GM13977 (cell line): ENCODE measurements at regions of chr6 and their contacts with region 1.

Region 1: DNA sequence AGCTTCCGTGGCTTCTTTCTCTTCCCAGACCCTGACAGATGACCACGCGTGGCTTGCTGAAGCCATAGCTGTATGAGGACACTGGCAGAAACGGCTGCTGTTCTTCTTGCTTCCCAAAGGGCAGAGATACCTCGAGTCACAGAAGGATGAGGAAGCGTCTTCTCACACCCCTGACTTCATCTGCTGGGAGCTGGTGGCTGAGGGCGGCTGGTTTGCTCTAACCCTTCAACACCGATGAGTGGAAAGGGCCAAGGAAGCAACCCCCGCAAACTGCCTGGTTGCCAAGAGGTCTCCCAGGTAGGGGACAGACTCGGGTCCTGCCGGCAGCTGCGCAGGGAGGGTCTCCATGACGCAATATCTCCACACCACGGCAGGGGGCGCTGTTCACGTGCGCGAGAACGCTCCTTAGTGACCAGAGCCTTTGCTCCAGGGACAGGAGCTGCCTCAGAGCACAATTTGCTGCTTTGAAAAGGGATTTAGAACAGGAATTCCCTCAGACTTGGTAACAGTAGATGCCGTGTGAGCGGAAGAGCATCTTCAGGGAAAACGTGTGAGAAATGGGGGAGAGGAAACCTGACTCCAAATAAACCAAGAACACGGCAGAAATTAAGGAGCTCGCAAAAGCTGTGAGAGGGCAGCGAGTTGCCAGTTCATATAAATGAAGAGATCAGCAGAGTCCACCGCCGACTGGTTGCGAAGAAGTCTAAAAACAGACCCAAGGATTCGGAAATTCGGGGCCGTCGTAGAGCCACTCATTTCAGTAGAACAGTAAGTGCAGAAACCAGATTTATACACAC is 80.2 kb downstream of the ERMARD start:
- DNase-seq: peak; percentile 81
- CTCF ChIP-seq: peak; percentile 92

Region 2: DNA sequence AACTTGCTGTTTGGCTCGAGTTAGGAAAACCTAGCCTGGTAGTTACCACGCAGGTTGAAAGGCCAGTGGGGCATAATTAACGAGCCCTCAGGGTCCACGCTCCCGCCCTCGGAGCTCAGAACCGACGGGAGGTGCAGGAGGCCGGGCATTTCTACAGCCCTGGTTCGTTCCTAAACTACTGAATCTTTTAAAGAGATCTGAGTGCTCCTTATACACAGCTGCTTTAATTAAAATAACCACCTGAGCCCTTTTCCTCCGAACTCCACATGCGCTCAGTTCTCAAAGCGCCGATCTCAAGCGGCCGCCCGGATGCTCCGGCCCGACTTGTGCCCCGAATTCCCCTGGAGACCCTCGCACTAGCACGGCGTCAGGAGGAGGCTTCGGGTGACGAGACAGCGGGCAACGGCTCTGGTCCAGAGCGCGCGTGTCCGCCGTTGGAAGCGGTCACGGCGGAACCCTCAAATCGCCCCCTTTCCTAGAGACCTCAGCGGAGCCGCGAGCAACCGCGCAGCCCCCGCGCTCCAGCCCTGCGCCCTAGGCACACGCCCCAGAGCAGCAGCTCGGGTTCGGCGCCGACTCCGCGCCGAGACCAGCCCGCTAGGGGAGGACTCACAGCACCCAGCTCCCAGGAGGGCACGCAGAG is 130.2 kb before region 1 on chr6:
- in situ Hi-C with region 1: no loop called
- DNase-seq: peak; percentile 22
- CTCF ChIP-seq: peak; percentile 22

Region 3: DNA sequence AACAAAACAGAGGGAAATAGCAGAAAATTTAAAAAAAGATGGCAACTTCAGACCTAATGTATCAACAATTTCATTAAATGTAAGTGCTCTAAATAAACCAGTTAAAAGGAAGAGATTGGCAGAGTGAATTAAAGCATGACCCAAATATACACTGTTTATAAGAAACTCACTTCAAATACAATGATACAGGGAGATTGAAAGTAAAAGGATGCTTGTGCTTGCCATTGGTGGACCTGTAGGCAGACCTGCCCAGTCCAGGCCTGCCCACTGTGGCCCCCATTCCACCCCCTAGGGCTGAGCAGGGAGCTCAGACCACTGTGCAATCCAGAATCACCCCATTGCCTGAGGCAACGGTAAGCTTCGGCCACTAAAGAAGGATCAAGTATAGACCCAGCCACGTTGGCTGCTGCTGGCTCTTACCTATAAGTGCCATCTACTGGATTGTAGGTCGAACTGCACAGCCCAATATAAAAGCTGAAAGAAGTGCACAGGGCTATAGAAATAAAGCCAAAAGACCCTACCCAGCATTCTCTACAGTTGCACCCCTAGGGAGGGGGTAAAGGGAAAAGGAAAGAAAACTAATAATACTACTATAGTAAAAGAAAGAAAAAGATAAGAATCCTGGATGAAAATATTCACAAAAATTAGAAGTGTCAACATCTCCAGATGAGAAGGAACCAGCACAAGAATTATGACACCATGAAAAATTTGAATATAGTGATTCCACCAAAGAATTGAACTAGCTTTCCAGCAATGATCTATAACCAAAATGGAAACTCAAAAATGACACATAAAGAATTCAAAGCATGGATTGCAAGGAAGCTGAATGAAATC is 685.4 kb after region 1 on chr6:
- in situ Hi-C with region 1: loop called (anchors 10 kb)
- DNase-seq: peak; percentile 48
- CTCF ChIP-seq: peak; percentile 87